ENCODE measurements at regions of chr1 and their contacts with region 1.

Region 1: GRCh38 chr1:151942882-151943281 is 33.6 kb upstream of the THEM4 start:
- DNase-seq: no peak
- H3K4me3 ChIP-seq: no peak overlapping the region
- H3K27ac ChIP-seq: no peak overlapping the region
- H3K4me1 ChIP-seq: peaks cover 35 to 58% (median 41%) of the 10 kb centered on the region in 4 donors
- H3K27me3 ChIP-seq: no peaks in the 10 kb centered on the region
- CTCF ChIP-seq: no peak
- EP300 ChIP-seq: no peak
- POLR2A ChIP-seq: no peak

Region 2: DNA sequence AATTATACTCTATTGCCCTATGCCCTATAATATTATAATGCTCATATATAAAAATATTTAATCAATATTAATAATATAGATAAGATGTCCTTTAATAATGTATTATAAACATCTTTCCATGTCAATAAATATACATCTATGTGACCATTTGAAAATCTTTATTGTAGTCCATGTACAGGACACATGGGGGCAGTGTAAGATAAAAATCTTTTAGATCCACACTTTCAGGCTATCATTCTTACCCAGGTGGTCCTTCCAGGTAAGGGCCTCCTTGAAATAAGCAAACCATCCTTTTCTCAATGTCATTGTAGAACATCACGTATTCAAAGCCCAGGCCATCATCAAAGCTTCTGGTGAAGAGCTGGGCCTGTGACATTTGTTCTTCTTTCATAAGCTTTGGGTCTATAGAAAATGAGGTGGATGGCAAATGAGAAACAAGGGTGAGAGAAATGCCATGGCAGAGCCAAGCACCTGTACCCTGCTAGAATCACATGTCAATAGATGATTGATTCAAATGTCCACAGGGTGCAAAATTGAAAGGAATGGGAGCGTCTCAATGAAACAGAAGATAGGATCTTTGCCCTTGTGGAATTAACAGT is 53.8 kb before region 1 on chr1:
- in situ Hi-C with region 1: no loop called
- intact Hi-C with region 1: no loop called
- DNase-seq: no peak
- H3K4me3 ChIP-seq: no peak overlapping the region
- H3K27ac ChIP-seq: no peak overlapping the region
- H3K4me1 ChIP-seq: no peaks in the 10 kb centered on the region
- H3K27me3 ChIP-seq: no peaks in the 10 kb centered on the region
- CTCF ChIP-seq: peak; percentile 31 to 47 (median 42)
- EP300 ChIP-seq: no peak
- POLR2A ChIP-seq: no peak

Region 3: DNA sequence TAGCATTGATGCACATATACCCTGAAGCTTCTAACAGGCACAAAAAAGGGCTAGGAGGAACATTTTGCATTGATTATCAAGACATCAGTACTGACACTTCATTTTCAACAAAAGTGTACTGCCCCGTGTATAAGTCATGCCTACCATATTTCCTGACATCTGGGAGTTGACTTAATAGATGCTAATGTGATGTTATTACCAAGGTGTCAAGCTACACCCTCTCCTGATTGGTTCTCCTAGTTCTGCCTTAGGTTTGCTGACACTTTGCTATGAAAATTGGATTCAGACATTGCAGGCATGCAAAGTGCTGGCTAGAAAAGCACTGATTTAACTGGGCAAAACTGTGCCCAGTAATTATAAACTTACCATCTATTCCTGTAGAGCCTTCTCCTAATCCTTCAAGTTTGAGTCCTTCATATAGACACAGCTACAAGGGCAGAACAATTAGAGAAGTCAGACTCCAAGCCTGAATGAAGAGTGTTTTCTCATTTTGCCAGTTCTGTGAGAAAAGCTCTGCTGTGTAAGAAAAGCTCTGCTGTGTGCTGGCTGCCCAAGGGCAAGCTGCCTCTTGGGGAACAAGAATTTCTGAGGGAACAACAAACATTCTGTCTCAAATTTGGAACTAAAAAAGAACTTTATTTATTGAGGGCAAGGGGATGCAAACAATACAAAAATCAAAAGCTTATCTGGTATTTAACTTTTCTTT is 39.6 kb after region 1 on chr1:
- in situ Hi-C with region 1: no loop called
- intact Hi-C with region 1: loop called (anchors 1 kb)
- DNase-seq: no peak
- H3K4me3 ChIP-seq: no peak overlapping the region
- H3K27ac ChIP-seq: no peak overlapping the region
- H3K4me1 ChIP-seq: peaks cover 7 to 69% (median 19%) of the 10 kb centered on the region in 4 donors
- H3K27me3 ChIP-seq: no peaks in the 10 kb centered on the region
- CTCF ChIP-seq: no peak
- EP300 ChIP-seq: no peak
- POLR2A ChIP-seq: no peak

Region 4: DNA sequence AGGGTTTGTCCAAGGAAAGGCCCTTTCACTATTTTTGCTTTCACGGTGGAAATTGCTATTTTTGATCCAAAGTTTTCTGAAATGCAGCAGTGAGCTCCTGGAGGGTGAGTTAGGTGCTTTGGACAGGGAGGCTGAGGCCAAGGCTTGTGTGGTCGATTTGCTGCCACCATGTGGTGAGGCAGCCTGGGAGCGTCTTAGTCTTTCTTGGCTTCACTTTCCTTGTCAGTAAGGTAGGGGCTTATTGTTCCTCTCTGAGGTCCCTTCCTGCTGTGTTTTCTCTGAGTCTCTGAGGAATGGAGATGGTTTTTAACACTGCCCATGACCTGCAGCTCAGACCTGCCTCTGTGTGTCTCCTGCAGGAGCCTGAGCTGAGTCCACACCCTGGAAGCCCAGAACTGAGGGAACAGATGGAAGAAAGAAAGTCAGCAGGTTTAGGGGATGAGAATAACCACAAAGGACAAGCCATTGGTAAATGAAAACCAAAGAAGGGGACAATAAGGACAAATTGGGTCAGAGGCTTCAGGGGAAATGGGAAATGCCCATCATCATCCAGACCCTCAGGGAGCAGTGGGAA is 70.9 kb after region 1 on chr1:
- in situ Hi-C with region 1: no loop called
- intact Hi-C with region 1: no loop called
- DNase-seq: peak; percentile 51
- H3K4me3 ChIP-seq: no peak overlapping the region
- H3K27ac ChIP-seq: no peak overlapping the region
- H3K4me1 ChIP-seq: no peaks in the 10 kb centered on the region
- H3K27me3 ChIP-seq: no peaks in the 10 kb centered on the region
- CTCF ChIP-seq: peak; percentile 33 to 53 (median 47)
- EP300 ChIP-seq: no peak
- POLR2A ChIP-seq: no peak

Region 5: GRCh38 chr1:152440635-152441471 is 498.0 kb after region 1 on chr1:
- in situ Hi-C with region 1: no loop called
- intact Hi-C with region 1: no loop called
- DNase-seq: peak; percentile 67
- H3K4me3 ChIP-seq: no peak overlapping the region
- H3K27ac ChIP-seq: no peak overlapping the region
- H3K4me1 ChIP-seq: peaks cover 0 to 4% (median 0%) of the 10 kb centered on the region in 4 donors
- H3K27me3 ChIP-seq: no peaks in the 10 kb centered on the region
- CTCF ChIP-seq: peak; percentile 62 to 78 (median 74)
- EP300 ChIP-seq: no peak
- POLR2A ChIP-seq: no peak

Measured in transverse colon (tissue), 4 donors.